ENCODE measurements at regions of chr17 and their contacts with region 1.

Region 1: DNA sequence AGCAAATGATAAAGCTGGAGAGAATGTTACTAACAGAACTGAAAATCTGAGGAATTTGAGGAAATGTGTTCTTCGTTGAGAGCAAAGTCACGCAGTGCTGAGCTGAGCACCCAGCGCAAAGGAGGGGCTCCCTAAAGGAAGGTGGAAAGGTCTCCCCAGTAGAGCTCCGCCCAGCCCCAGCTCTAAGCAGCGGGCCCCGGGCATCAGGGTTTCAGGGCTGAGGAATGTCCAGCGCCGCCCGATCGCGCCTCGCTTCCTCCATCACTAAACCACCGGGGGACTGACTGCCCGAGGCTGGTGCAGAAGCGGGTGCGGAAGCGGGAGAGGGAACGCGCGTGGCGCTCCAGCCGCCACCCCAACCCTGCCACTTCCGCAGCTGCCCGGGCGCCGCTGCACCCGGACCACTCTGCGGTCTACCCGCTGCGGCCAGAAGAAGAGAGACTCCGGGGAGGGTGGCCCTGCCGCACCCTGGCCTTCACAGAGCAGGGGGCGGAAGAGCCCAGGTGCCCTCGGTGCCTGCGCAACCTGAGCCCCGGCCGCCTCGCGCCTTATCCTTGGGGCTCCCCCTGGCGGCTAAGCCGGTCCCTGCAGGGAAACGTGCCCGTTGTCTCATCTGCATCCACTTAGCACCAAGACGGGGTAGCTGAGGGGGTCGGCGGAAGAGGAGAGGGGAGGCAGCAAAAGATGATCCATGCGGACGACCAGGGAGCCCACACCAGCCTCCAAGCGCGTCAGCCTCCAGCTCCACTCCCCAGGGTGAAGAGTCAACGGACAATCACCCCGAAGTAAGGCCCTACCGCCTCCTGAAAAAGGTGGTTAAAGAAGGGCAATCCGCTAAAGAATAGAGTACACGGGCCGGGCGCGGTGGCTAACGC is 12.4 kb upstream of the GUCY2D start:
- DNase-seq: peak; percentile 96
- ATAC-seq: peak; percentile 95
- H3K4me3 Mint-ChIP-seq: peak overlapping the region; percentile 73
- H3K27ac Mint-ChIP-seq: peak overlapping the region; percentile 92
- H3K4me1 Mint-ChIP-seq: peaks cover 20% of the 10 kb centered on the region
- H3K27me3 Mint-ChIP-seq: no peaks in the 10 kb centered on the region
- CTCF ChIP-seq: peak; percentile 84

Region 2: DNA sequence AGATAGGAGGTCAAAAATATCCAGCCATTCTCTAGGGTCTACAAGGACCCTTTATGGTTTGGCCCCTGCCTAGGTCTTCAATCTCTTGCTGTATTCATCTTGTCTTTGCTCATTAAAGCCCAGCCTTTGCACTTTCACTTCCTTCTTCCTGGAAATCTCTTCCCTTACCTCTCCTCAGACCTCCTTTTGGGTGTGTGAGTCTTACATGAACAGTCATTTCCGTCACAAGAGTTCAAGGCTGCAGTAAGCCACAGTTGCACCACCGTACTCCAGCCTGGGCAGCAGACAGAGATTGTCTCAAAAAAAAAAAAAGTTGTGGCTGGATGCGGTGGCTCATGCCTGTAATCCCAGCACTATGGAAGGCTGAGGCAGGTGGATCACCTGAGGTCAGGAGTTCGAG is 345.2 kb before region 1 on chr17:
- CTCF ChIA-PET with region 1: no interaction called
- POLR2A ChIA-PET with region 1: no interaction called
- intact Hi-C with region 1: no loop called
- DNase-seq: no peak
- ATAC-seq: no peak
- H3K4me3 Mint-ChIP-seq: no peak overlapping the region
- H3K27ac Mint-ChIP-seq: no peak overlapping the region
- H3K4me1 Mint-ChIP-seq: peaks cover 3% of the 10 kb centered on the region
- H3K27me3 Mint-ChIP-seq: peaks cover 7% of the 10 kb centered on the region
- CTCF ChIP-seq: no peak

Region 3: GRCh38 chr17:7862692-7863437 is 127.2 kb before region 1 on chr17:
- CTCF ChIA-PET with region 1: interaction called, 78 read pairs
- POLR2A ChIA-PET with region 1: interaction called, 5 read pairs
- intact Hi-C with region 1: loop called (anchors 2 kb)
- DNase-seq: peak; percentile 70
- ATAC-seq: no peak
- H3K4me3 Mint-ChIP-seq: no peak overlapping the region
- H3K27ac Mint-ChIP-seq: no peak overlapping the region
- H3K4me1 Mint-ChIP-seq: peaks cover 33% of the 10 kb centered on the region
- H3K27me3 Mint-ChIP-seq: no peaks in the 10 kb centered on the region
- CTCF ChIP-seq: peak; percentile 96

Region 4: DNA sequence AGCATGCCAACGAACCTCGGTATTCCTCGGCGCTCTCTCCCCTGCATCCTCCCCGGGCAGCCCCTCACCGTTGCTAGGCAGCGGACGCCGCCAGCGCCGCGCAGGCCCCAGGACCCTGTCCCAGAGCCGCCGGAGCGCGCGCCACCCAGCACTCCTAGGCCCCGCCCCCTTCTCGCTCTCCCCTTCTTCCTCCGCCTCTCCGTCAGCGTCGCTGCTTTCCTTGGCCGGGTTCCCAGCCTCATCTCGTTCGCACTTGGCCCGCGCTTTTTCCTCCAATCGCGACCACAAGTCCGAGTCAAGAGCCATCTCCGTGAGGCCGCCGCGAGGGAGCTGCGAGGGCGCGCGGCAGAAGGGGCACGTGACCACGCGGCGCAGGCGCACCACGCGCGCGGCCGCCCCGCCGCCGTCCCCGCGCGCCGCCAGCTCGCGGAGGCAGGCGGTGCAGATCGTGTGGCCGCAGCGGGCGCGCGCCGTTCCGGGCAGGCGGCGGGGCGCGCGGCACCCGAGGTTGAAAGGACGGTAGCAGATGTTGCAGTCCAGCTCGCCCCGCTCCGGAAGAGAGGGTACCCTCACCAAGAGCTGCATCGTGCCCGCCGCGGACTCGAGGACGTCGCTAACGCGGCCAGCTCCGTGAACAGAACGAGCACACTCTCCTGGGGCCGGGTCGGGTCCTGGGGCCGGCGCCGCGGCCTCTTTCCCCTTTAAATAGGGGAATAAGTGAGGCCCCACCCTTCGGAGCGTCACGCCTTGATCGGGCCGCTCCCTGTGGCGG is 74.2 kb before region 1 on chr17 and contains the start of gene RNF227:
- CTCF ChIA-PET with region 1: interaction called, 214 read pairs
- POLR2A ChIA-PET with region 1: interaction called, 21 read pairs
- intact Hi-C with region 1: loop called (anchors 2 kb)
- DNase-seq: peak; percentile 94
- ATAC-seq: peak; percentile 87
- H3K4me3 Mint-ChIP-seq: peak within 1 kb of the TSS; percentile 85
- H3K27ac Mint-ChIP-seq: peak within 1 kb of the TSS; percentile 87
- H3K4me1 Mint-ChIP-seq: peaks cover 22% of the 10 kb centered on the region
- H3K27me3 Mint-ChIP-seq: no peaks in the 10 kb centered on the region
- CTCF ChIP-seq: no peak
- total RNA-seq, gene RNF227: 5.1 to 5.2 TPM

Region 5: DNA sequence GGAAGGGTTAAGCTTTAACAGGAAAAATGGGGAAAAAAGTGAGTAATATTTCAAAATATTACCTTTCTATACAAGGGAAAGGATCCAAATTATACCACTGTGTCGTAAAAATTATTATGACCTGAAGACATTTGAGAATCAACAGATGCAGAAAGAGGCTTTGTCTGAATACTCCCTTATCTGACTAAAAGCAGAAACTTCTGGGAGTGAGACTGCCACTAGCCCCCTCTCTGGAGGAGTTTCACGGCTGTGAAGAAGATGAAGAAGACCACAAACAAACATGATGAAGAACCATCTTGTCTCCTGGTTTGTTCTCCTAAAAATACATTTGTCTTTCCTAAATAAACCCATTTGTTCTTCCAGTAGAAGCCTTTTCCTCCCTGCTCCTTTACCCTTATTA is 28.6 kb before region 1 on chr17:
- CTCF ChIA-PET with region 1: interaction called, 12 read pairs
- POLR2A ChIA-PET with region 1: no interaction called
- intact Hi-C with region 1: no loop called
- DNase-seq: no peak
- ATAC-seq: no peak
- H3K4me3 Mint-ChIP-seq: no peak overlapping the region
- H3K27ac Mint-ChIP-seq: no peak overlapping the region
- H3K4me1 Mint-ChIP-seq: no peaks in the 10 kb centered on the region
- H3K27me3 Mint-ChIP-seq: peaks cover 3% of the 10 kb centered on the region
- CTCF ChIP-seq: no peak

Region 6: GRCh38 chr17:8016632-8017478 is 26.8 kb after region 1 on chr17:
- CTCF ChIA-PET with region 1: interaction called, 13 read pairs
- POLR2A ChIA-PET with region 1: no interaction called
- intact Hi-C with region 1: no loop called
- DNase-seq: peak; percentile 77
- ATAC-seq: peak; percentile 92
- H3K4me3 Mint-ChIP-seq: peak overlapping the region; percentile 64
- H3K27ac Mint-ChIP-seq: no peak overlapping the region
- H3K4me1 Mint-ChIP-seq: peaks cover 11% of the 10 kb centered on the region
- H3K27me3 Mint-ChIP-seq: peaks cover 14% of the 10 kb centered on the region
- CTCF ChIP-seq: peak; percentile 85